Panc1 (cell line): ENCODE measurements at regions of chr6 and their contacts with region 1.

Region 1: GRCh38 chr6:127464881-127465459 is 5.8 kb upstream of the KIAA0408 start:
- DNase-seq: peak; percentile 52
- ATAC-seq: peak; percentile 96
- H3K4me3 ChIP-seq: no peak overlapping the region
- H3K27ac ChIP-seq: no peak overlapping the region
- H3K4me1 ChIP-seq: no peaks in the 10 kb centered on the region
- H3K27me3 ChIP-seq: no peaks in the 10 kb centered on the region
- CTCF ChIP-seq: peak; percentile 92

Region 2: DNA sequence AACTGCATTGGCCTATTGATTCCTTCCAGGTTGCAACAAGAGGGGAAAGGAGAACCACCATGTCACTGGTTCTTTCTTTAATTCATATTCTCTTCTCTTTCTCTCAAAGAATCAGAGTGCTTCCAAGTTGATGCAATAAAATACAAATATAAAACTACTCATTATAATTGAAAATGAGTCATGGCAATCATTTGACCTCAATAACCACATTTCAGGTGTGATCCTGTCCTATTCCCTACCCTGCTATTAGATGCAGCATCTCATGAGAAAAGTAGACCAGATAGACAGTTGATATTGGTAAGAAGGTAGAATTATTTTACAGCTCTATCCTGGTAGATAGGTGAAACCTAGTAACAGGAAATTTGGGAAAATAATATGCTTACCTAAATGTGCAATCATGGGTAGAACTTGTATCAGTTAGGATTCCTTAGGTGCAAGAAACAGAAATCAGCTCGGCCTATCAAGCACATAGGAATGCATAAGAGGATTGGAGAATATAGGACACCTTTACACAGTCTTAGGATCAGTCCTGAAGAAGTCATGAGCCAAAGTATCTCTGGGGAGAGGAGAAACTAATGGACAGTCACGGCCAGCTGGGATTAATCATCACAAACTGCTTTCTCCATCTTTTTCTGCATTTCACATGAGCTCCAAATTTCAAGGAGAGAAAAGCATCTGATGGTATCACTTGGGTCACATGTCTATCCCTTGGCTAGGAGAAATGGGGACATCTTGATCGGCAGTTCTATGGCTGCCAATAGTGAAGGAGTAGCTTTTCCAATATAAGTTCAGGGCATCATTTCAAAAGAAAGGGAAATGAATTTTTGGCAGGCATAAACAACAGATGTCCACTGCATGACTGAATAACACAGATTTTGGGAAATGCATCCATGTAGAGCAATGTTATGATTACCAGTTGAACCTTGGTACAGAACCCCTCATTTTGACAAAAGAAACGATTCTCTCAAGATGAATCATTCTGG is 217.6 kb before region 1 on chr6:
- CTCF ChIA-PET with region 1: no interaction called
- POLR2A ChIA-PET with region 1: no interaction called
- in situ Hi-C with region 1: no loop called
- intact Hi-C with region 1: no loop called
- DNase-seq: no peak
- ATAC-seq: no peak
- H3K4me3 ChIP-seq: no peak overlapping the region
- H3K27ac ChIP-seq: no peak overlapping the region
- H3K4me1 ChIP-seq: no peaks in the 10 kb centered on the region
- H3K27me3 ChIP-seq: no peaks in the 10 kb centered on the region; the same call in none of the 2 replicates
- CTCF ChIP-seq: no peak

Region 3: DNA sequence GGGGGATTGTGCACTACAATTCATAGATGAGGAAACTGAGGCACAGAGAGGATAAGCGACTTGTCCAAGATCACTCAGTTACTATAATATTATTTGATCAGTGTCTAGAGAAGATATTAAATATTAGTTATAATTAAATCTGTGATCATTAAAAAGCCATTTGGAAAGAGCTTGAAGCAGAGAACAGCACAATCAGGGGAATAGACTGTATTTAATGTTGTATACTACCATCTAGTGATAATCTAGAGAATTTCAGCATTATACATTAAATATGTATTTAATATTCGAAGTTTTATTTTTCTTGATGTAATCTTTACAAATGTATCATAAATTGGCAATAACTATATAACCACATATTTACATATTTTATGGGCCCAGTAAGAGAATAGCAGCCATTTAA is 74.3 kb after region 1 on chr6:
- CTCF ChIA-PET with region 1: no interaction called
- POLR2A ChIA-PET with region 1: no interaction called
- in situ Hi-C with region 1: no loop called
- intact Hi-C with region 1: loop called (anchors 1 kb)
- DNase-seq: no peak
- ATAC-seq: 0 out of 2 replicates have a peak, but pooled peaks have one; percentile 66
- H3K4me3 ChIP-seq: no peak overlapping the region
- H3K27ac ChIP-seq: no peak overlapping the region
- H3K4me1 ChIP-seq: no peaks in the 10 kb centered on the region
- H3K27me3 ChIP-seq: 0 out of 2 replicates have a peak, but pooled peaks cover 3% of the 10 kb centered on the region
- CTCF ChIP-seq: peak; percentile 47; the same call in 1 of the 2 replicates